ENCODE measurements at regions of chr20 and their contacts with region 1.

Region 1: DNA sequence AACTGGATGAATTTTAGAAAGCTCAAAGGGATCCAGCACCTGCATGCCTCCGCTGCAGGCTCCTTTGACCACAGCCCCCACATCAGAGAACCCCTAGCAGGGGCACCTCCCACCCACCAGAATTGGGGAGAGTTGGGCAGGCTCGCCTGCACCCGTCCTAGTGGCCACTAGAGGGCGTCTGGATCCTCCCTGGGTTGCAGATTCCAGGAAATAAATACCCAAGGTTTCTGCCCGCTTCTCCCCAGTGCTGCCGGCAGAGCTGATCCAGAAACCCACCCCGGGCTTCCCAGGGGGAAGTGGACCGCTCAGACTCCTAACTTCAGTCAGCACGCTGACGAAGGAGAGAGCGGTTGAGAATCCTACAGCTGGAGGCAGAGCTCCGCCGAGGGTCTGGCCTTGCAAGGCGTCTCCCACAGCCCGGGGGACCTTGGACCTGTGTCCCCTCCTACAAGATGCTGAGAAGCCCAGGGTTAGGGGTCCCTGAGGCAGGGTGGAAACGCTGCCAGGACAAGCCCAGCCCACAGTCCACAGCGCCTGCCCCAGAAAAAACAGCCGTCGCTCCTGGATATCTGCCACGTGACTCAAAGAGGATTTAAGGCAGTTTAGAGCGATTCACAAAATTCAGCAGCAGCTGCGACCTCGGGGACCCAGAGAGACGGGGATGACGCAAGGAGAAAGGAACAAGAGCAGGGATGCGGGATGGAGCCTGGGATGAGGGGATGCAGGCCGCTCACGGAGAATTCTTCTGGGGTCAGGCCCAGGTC is 32.6 kb upstream of the PHACTR3 start:
- H3K4me3 Mint-ChIP-seq: peak overlapping the region; percentile 14
- H3K27ac Mint-ChIP-seq: no peak overlapping the region
- H3K4me1 Mint-ChIP-seq: peaks cover 5% of the 10 kb centered on the region
- H3K27me3 Mint-ChIP-seq: peaks cover 54% of the 10 kb centered on the region

Region 2: GRCh38 chr20:58568501-58569240 is 1003.1 kb before region 1 on chr20:
- intact Hi-C with region 1: no loop called
- H3K4me3 Mint-ChIP-seq: no peak overlapping the region
- H3K27ac Mint-ChIP-seq: no peak overlapping the region
- H3K4me1 Mint-ChIP-seq: no peaks in the 10 kb centered on the region
- H3K27me3 Mint-ChIP-seq: peaks cover 4% of the 10 kb centered on the region

Region 3: DNA sequence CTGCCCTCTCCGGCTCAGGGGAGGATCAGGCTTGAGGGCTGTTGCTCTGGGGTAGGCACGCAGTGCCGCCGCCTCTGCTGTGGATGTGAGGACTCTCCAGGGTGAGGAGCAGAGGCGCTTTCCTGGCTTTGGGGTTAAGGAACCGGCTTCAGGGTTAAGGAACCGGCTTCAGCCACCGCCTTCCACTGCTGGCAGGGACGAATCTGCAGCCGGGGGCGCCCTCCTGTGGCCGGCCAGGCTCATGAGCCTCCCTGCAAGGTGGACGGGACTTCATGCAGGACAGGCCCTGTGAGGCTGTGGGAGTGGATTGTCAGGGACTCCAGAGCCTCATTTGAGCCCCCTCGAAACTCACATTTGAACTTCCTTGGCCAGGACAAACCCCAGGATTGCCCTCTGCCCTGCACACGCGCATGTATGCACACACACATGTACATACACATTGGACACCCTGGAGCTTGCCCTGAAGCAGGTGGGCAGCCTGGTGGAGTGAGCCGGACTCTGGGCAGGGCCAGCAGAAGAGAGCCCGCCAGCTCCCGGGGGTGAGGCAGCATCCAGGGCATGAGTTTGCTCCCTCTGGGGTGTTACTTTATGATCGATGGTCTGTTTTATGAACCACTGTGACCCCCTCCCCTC is 179.4 kb after region 1 on chr20:
- intact Hi-C with region 1: loop called (anchors 1 kb)
- H3K4me3 Mint-ChIP-seq: no peak overlapping the region
- H3K27ac Mint-ChIP-seq: peak overlapping the region; percentile 23
- H3K4me1 Mint-ChIP-seq: peaks cover 41% of the 10 kb centered on the region
- H3K27me3 Mint-ChIP-seq: peaks cover 80% of the 10 kb centered on the region

Region 4: GRCh38 chr20:60172346-60172984 is 600.7 kb after region 1 on chr20:
- intact Hi-C with region 1: no loop called
- H3K4me3 Mint-ChIP-seq: no peak overlapping the region
- H3K27ac Mint-ChIP-seq: no peak overlapping the region
- H3K4me1 Mint-ChIP-seq: no peaks in the 10 kb centered on the region
- H3K27me3 Mint-ChIP-seq: no peaks in the 10 kb centered on the region